Activated naive CD4-positive, alpha-beta T cell treated with anti-CD3 and anti-CD28 coated beads for 36 hours (primary cell): ENCODE measurements at regions of chr2 and their contacts with region 1.

Region 1: GRCh38 chr2:130797493-130798435 is 39.0 kb upstream of the ARHGEF4 start:
- DNase-seq: peak; percentile 92
- H3K4me3 Mint-ChIP-seq: peak overlapping the region; percentile 63
- H3K27ac Mint-ChIP-seq: no peak overlapping the region
- H3K4me1 Mint-ChIP-seq: peaks cover 5% of the 10 kb centered on the region
- H3K27me3 Mint-ChIP-seq: no peaks in the 10 kb centered on the region

Region 2: DNA sequence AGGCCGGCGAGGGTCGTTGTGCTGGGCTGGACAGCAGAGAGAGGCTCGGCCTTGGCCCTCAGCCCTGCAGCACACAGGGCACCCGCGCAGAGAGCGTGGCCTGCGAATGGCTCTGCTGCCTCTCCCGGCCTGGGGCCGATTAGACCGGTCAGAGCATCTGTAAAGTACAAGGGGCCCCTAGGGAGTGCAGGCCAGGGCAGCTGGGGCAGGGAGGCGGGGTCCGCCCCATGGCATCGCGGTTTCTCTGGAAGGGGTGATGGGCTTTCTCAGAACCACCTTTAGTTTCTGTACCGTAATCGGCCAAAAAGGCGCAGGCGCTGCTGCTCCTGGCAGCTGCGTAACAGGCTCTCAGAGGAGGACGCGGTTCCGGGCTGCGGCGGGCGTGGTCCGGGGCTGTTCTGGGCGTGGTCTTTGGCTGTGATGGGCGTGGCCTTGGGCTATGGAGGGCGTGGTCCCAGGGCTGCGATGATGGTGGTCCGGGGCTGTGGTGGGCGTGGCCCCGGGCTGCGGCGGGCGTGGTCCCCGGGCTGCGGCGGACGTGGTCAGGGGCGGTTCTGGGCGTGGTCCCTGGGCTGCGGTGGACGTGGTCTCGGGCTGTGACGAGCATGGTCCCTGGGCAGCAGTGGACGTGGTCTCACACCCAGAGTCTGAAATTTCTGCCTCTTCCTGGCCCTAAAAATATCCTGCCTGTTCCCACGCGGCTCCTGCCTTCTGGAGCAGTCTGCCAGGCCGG is 70.3 kb before region 1 on chr2:
- CTCF ChIA-PET with region 1: interaction called, 9 read pairs
- intact Hi-C with region 1: loop called (anchors 1 kb)
- DNase-seq: peak; percentile 92
- H3K4me3 Mint-ChIP-seq: peak overlapping the region; percentile 73
- H3K27ac Mint-ChIP-seq: peak overlapping the region; percentile 43
- H3K4me1 Mint-ChIP-seq: peaks cover 7% of the 10 kb centered on the region
- H3K27me3 Mint-ChIP-seq: no peaks in the 10 kb centered on the region

Region 3: GRCh38 chr2:130755256-130756052 is 42.3 kb before region 1 on chr2 and contains the start of gene AMER3:
- CTCF ChIA-PET with region 1: no interaction called
- intact Hi-C with region 1: no loop called
- DNase-seq: no peak
- H3K4me3 Mint-ChIP-seq: no peak within 1 kb of the TSS
- H3K27ac Mint-ChIP-seq: no peak within 1 kb of the TSS
- H3K4me1 Mint-ChIP-seq: peaks cover 3% of the 10 kb centered on the region
- H3K27me3 Mint-ChIP-seq: peaks cover 44% of the 10 kb centered on the region
- total RNA-seq, gene AMER3: not detected

Region 4: DNA sequence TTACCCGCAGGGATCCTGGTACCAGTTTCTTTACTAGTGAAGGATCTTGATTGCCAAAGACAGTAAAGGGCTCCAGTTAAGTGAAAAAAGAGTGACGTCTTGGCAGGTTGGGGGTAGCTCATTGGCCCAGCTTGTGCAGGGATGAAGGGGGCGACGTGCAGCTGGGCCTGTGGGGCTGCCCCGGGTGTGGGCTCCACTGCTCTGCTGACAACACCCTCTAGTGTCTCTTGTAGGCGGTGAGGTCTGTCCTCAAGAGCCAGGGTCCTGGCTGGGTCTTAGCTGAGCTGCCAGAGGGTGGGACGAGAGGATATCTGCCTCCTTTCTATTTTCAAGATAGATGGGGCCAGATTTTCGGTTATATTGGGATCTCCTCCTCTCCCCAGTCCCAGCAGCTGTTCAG is 45.0 kb after region 1 on chr2:
- CTCF ChIA-PET with region 1: interaction called, 4 read pairs
- intact Hi-C with region 1: loop called (anchors 2 kb)
- DNase-seq: no peak
- H3K4me3 Mint-ChIP-seq: no peak overlapping the region
- H3K27ac Mint-ChIP-seq: no peak overlapping the region
- H3K4me1 Mint-ChIP-seq: no peaks in the 10 kb centered on the region
- H3K27me3 Mint-ChIP-seq: peaks cover 20% of the 10 kb centered on the region

Region 5: DNA sequence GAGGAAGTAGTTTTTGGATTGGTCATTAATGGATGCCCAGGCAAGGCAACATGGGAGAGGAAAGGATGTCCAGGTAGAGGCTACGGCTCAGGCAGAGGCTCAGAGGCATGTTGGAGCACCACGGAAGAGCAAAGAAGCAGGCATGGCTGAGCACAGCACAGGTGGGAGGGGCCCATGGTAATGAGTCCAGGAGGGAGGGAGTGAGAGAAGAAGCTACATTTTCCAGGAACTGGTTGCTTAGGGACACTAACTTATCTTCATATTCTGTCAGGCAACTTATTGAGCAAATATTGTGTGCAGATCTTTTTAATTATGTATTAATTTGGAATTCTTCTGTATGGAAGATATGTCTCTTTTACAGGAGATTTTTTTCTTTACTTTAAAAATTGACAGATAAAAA is 81.2 kb after region 1 on chr2:
- CTCF ChIA-PET with region 1: interaction called, 174 read pairs
- intact Hi-C with region 1: no loop called
- DNase-seq: no peak
- H3K4me3 Mint-ChIP-seq: no peak overlapping the region
- H3K27ac Mint-ChIP-seq: no peak overlapping the region
- H3K4me1 Mint-ChIP-seq: no peaks in the 10 kb centered on the region
- H3K27me3 Mint-ChIP-seq: peaks cover 3% of the 10 kb centered on the region

Region 6: GRCh38 chr2:130963849-130964793 is 166.4 kb after region 1 on chr2:
- CTCF ChIA-PET with region 1: interaction called, 6 read pairs
- intact Hi-C with region 1: loop called (anchors 1 kb)
- DNase-seq: peak; percentile 27
- H3K4me3 Mint-ChIP-seq: peak overlapping the region; percentile 11
- H3K27ac Mint-ChIP-seq: no peak overlapping the region
- H3K4me1 Mint-ChIP-seq: peaks cover 7% of the 10 kb centered on the region
- H3K27me3 Mint-ChIP-seq: peaks cover 49% of the 10 kb centered on the region

Region 7: DNA sequence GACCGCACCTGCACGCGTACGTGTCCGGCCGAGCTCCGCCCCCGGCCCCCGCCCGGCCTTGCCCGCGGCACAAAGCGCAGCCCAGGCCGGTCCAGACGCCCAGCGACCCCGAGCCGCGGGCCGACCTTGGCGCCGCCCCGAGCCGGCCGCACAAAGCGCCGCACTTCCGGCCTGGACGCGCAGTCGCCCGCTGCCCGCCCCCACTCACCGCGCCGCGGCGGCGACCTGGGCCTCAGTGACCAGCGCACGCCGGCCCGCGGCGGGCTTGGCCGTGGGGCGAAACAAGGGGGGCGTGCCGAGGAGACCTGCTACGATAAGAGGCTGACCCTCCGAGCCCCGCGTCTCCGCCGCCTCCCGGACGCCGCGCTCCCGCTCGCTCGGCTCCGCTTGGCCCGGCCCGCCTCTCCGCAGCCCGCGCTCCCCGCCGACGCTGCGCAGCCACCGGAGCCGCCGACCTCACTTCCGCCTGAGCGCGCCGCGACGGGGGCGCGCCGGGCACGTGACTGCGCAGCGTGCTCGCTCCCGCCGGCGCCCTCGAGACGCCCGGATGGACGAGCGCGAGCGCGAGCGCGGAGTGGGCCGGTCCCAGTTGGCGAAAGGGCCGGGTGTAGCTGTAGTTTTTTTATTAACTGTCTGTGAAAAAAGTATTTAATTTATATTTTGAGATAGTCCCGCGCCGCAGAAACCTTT is 295.4 kb after region 1 on chr2 and contains the start of gene FAM168B:
- CTCF ChIA-PET with region 1: no interaction called
- intact Hi-C with region 1: loop called (anchors 1 kb)
- DNase-seq: peak; percentile 86
- H3K4me3 Mint-ChIP-seq: peak within 1 kb of the TSS; percentile 85
- H3K27ac Mint-ChIP-seq: peak within 1 kb of the TSS; percentile 92
- H3K4me1 Mint-ChIP-seq: peaks cover 20% of the 10 kb centered on the region
- H3K27me3 Mint-ChIP-seq: no peaks in the 10 kb centered on the region
- total RNA-seq, gene FAM168B: 52.7 to 55.0 TPM

Region 8: GRCh38 chr2:131154071-131154531 is 356.3 kb after region 1 on chr2:
- CTCF ChIA-PET with region 1: interaction called, 3 read pairs
- intact Hi-C with region 1: loop called (anchors 5 kb)
- DNase-seq: peak; percentile 93
- H3K4me3 Mint-ChIP-seq: no peak overlapping the region
- H3K27ac Mint-ChIP-seq: no peak overlapping the region
- H3K4me1 Mint-ChIP-seq: peaks cover 22% of the 10 kb centered on the region
- H3K27me3 Mint-ChIP-seq: no peaks in the 10 kb centered on the region